ENCODE measurements at regions of chr11 and their contacts with region 1.

Region 1: GRCh38 chr11:9314291-9315036 is at the start of gene TMEM41B:
- DNase-seq: peak; percentile 100
- ATAC-seq: peak; percentile 94
- H3K4me3 Mint-ChIP-seq: peak within 1 kb of the TSS; percentile 99
- H3K27ac Mint-ChIP-seq: peak within 1 kb of the TSS; percentile 100
- H3K4me1 Mint-ChIP-seq: peaks cover 17% of the 10 kb centered on the region
- H3K27me3 Mint-ChIP-seq: peaks cover 17% of the 10 kb centered on the region
- total RNA-seq, gene TMEM41B: 40.5 to 42.3 TPM

Region 2: DNA sequence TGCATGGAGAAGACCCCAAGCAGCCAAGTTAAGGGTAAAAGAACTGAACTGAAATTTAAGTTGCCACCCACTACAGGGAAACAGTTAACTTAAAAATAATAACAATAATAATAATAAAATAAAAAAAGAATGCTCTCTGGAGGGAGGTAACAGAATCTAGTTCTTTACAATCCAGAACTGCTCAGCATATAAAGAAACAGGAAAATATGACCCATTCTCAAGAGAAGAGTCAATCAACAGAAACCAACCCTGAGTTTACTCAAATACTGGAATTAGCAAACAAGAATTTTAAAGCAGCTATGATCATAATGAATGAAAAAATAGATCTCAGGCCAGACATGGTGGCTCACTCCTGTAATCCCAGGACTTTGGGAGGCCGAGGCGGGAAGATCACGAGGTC is 103.1 kb before region 1 on chr11:
- POLR2A ChIA-PET with region 1: interaction called, 10 read pairs
- DNase-seq: no peak
- ATAC-seq: no peak
- H3K4me3 Mint-ChIP-seq: no peak overlapping the region
- H3K27ac Mint-ChIP-seq: no peak overlapping the region
- H3K4me1 Mint-ChIP-seq: peaks cover 57% of the 10 kb centered on the region
- H3K27me3 Mint-ChIP-seq: no peaks in the 10 kb centered on the region

Region 3: GRCh38 chr11:9265211-9266131 is 49.0 kb before region 1 on chr11 and contains the start of gene DENND5A:
- POLR2A ChIA-PET with region 1: interaction called, 10 read pairs
- DNase-seq: no peak
- ATAC-seq: peak; percentile 67
- H3K4me3 Mint-ChIP-seq: peak within 1 kb of the TSS; percentile 93
- H3K27ac Mint-ChIP-seq: peak within 1 kb of the TSS; percentile 90
- H3K4me1 Mint-ChIP-seq: peaks cover 27% of the 10 kb centered on the region
- H3K27me3 Mint-ChIP-seq: peaks cover 14% of the 10 kb centered on the region
- total RNA-seq, gene DENND5A: 74.3 to 75.2 TPM

Region 4: GRCh38 chr11:9280655-9281301 is 33.7 kb before region 1 on chr11:
- POLR2A ChIA-PET with region 1: interaction called, 21 read pairs
- DNase-seq: peak; percentile 44
- ATAC-seq: peak; percentile 95
- H3K4me3 Mint-ChIP-seq: peak overlapping the region; percentile 72
- H3K27ac Mint-ChIP-seq: peak overlapping the region; percentile 76
- H3K4me1 Mint-ChIP-seq: peaks cover 15% of the 10 kb centered on the region
- H3K27me3 Mint-ChIP-seq: no peaks in the 10 kb centered on the region

Region 5: DNA sequence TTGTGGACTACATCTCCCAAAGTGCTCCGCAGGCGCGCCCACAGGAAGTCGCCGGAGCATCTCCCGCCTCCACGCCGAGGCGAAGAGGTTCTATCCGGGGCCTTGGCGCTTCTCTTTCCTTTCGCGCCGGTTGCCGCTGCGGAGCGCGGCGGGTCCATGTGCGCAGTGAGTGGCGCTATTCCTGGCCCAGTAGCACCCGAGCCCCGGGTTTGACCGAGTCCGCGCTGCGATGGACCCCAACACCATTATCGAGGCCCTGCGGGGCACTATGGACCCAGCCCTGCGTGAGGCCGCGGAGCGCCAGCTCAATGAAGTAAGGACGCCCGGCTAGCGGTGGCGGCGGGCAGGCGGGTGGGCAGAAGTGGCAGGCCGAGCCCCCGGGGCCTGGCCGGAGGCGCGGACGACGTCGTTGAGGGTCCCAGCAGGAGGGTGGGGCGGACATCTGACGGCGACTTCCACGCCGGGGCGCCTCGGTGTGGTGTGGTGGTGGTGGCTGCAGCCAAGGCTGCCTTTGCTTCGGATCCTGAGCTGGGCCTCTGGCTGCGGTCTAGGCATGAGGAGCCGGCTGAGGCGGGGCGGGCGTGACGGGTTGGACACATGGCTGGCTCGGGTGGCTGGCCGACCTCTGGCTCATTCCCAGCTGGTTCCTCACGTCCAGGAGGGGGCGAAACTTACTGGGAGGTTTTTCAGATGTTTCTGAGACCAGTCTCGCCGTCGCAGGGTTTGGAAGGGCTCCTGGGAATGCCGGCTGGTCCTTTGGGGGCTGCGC is 70.3 kb after region 1 on chr11 and contains the start of gene IPO7:
- POLR2A ChIA-PET with region 1: interaction called, 18 read pairs
- DNase-seq: peak; percentile 87
- ATAC-seq: peak; percentile 96
- H3K4me3 Mint-ChIP-seq: peak within 1 kb of the TSS; percentile 93
- H3K27ac Mint-ChIP-seq: peak within 1 kb of the TSS; percentile 89
- H3K4me1 Mint-ChIP-seq: peaks cover 20% of the 10 kb centered on the region
- H3K27me3 Mint-ChIP-seq: no peaks in the 10 kb centered on the region
- total RNA-seq, gene IPO7: 78.9 to 81.1 TPM

Region 6: GRCh38 chr11:9448576-9449352 is 134.3 kb after region 1 on chr11:
- POLR2A ChIA-PET with region 1: no interaction called
- DNase-seq: no peak
- ATAC-seq: no peak
- H3K4me3 Mint-ChIP-seq: no peak overlapping the region
- H3K27ac Mint-ChIP-seq: no peak overlapping the region
- H3K4me1 Mint-ChIP-seq: peaks cover 4% of the 10 kb centered on the region
- H3K27me3 Mint-ChIP-seq: no peaks in the 10 kb centered on the region

Region 7: DNA sequence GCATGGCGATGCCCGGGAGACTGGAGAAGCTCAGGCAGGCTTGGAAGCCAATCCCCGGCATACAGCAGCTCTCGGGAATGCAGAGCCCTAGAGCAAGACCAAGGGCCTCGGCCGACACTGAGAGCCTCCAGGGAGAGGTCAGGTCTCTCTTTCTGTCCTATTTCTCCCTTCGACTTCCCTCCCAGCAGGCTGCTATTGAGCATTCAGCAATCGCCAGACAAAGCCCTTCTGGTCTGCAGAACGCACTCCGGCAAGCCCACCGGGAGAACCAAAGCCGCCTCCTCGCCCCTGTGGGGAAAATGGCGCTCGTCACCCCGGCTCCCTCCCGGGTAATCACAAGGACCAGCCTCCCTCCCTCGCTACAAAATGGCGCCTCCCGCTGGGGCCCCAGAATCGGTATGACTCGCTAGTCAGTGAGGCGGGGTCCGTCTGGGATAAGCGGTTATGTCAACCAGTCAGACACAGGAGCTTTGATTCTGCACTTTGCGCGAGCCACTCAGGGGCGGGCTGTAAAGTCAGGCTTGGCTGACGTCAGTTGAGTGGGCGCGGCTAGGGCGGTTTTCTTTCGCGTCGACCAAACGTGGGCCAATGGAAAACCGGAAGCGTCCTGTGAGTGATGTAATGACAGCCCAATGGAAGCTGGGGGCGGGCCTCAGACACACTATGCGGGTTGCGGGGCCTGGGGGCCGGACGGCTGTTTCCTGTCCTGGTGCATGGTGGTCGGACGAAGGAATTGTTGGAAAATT is 146.0 kb after region 1 on chr11 and contains the start of gene ZNF143:
- POLR2A ChIA-PET with region 1: interaction called, 22 read pairs
- DNase-seq: peak; percentile 99
- ATAC-seq: peak; percentile 91
- H3K4me3 Mint-ChIP-seq: peak within 1 kb of the TSS; percentile 95
- H3K27ac Mint-ChIP-seq: peak within 1 kb of the TSS; percentile 95
- H3K4me1 Mint-ChIP-seq: peaks cover 20% of the 10 kb centered on the region
- H3K27me3 Mint-ChIP-seq: no peaks in the 10 kb centered on the region
- total RNA-seq, gene ZNF143: 37.7 to 48.8 TPM

Measured in activated naive CD8-positive, alpha-beta T cell treated with anti-CD3 and anti-CD28 coated beads, Interleukin-2, amount 10 ng/mL, durations not matched to agents 7 days and 5 days (primary cell).